Activated naive CD4-positive, alpha-beta T cell treated with anti-CD3 and anti-CD28 coated beads for 36 hours (primary cell): ENCODE measurements at regions of chr15 and their contacts with region 1.

Region 1: DNA sequence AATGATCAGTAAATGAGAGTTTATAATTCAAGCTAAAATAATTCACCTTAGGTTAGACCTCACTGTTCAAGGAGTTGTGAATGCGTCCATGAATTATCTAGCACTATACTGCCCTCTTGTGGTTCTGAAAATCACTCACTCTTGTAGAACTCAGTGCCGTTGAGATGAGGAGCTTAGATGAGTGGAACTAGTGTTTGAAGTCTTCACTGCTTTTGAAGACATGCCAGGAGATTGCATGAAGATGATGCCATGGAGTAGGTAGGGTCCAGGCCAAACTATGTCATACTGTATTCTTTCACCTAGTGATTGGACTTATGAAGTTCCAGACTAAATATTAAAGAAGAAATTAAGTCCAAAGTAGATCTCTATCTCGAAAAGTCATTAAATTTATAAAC is 28.8 kb downstream of the LYSMD4 start:
- DNase-seq: peak; percentile 48
- H3K4me3 Mint-ChIP-seq: no peak overlapping the region
- H3K27ac Mint-ChIP-seq: no peak overlapping the region
- H3K4me1 Mint-ChIP-seq: peaks cover 50% of the 10 kb centered on the region
- H3K27me3 Mint-ChIP-seq: no peaks in the 10 kb centered on the region

Region 2: GRCh38 chr15:98805434-98806274 is 898.8 kb before region 1 on chr15:
- CTCF ChIA-PET with region 1: no interaction called
- intact Hi-C with region 1: no loop called
- DNase-seq: no peak
- H3K4me3 Mint-ChIP-seq: no peak overlapping the region
- H3K27ac Mint-ChIP-seq: no peak overlapping the region
- H3K4me1 Mint-ChIP-seq: peaks cover 41% of the 10 kb centered on the region
- H3K27me3 Mint-ChIP-seq: no peaks in the 10 kb centered on the region

Region 3: DNA sequence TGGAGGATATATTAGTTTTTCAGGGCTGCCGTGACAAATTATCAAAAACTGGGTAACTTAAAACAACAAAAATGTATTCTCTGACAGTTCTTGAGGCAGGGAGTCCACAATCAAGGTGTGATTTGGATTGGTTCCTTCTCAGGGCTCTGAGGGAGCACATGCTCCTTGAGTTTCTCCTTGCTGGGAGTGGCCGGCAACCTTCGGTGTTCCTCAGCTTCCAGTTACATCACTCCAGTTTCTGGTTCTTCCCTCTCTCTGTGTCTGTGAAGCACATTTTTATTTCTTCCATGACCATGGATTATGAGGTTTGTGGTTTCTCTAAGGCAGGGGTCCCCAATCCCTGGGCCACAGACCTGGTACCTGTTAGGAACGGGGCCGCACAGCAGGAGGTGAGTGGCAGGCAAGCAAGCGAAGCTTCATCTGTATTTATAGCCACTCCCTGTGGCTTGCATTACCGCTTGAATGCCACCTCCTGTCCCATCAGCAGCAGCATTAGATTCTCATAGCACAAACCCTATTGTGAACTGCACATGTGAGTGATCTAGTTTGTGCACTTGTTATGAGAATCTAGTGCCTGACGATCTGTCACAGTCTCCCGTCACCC is 428.8 kb before region 1 on chr15:
- CTCF ChIA-PET with region 1: interaction called, 72 read pairs
- intact Hi-C with region 1: loop called (anchors 1 kb)
- DNase-seq: no peak
- H3K4me3 Mint-ChIP-seq: no peak overlapping the region
- H3K27ac Mint-ChIP-seq: no peak overlapping the region
- H3K4me1 Mint-ChIP-seq: peaks cover 27% of the 10 kb centered on the region
- H3K27me3 Mint-ChIP-seq: no peaks in the 10 kb centered on the region

Region 4: DNA sequence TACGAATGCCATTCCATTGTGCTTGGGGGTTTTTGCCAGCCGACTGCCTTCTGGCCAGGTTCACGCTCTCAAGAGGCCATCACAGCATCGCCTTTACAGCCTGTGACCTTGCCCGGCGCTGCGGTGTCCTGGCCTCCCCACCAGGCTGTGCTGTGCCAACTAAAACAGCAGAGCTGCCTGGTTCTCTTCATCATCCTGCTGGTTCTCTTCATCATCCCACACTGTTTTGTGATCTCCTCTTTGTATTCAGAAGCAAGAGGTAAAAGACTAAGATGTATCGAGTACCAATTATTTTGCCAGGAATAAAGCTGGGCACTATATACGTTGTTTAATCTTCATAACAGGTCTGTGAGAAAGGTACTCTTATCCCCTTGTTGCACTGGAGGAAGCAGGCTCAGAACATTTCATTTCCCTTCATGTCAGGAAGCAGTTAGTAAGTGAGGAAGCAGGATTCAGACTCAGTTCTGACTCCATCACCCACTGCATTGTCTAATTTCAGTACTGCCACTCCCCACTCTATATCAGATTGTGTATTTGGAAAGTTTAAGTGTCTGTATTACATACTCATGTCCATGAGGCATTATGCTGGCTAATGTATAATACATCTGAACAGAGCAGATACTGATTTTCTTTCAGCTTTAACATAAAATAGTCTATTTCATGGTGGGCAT is 360.4 kb before region 1 on chr15:
- CTCF ChIA-PET with region 1: interaction called, 5 read pairs
- intact Hi-C with region 1: loop called (anchors 1 kb)
- DNase-seq: peak; percentile 43
- H3K4me3 Mint-ChIP-seq: no peak overlapping the region
- H3K27ac Mint-ChIP-seq: no peak overlapping the region
- H3K4me1 Mint-ChIP-seq: peaks cover 10% of the 10 kb centered on the region
- H3K27me3 Mint-ChIP-seq: no peaks in the 10 kb centered on the region

Region 5: GRCh38 chr15:99409097-99409473 is 295.4 kb before region 1 on chr15:
- CTCF ChIA-PET with region 1: interaction called, 15 read pairs
- intact Hi-C with region 1: loop called (anchors 1 kb)
- DNase-seq: peak; percentile 64
- H3K4me3 Mint-ChIP-seq: no peak overlapping the region
- H3K27ac Mint-ChIP-seq: no peak overlapping the region
- H3K4me1 Mint-ChIP-seq: peaks cover 19% of the 10 kb centered on the region
- H3K27me3 Mint-ChIP-seq: no peaks in the 10 kb centered on the region

Region 6: DNA sequence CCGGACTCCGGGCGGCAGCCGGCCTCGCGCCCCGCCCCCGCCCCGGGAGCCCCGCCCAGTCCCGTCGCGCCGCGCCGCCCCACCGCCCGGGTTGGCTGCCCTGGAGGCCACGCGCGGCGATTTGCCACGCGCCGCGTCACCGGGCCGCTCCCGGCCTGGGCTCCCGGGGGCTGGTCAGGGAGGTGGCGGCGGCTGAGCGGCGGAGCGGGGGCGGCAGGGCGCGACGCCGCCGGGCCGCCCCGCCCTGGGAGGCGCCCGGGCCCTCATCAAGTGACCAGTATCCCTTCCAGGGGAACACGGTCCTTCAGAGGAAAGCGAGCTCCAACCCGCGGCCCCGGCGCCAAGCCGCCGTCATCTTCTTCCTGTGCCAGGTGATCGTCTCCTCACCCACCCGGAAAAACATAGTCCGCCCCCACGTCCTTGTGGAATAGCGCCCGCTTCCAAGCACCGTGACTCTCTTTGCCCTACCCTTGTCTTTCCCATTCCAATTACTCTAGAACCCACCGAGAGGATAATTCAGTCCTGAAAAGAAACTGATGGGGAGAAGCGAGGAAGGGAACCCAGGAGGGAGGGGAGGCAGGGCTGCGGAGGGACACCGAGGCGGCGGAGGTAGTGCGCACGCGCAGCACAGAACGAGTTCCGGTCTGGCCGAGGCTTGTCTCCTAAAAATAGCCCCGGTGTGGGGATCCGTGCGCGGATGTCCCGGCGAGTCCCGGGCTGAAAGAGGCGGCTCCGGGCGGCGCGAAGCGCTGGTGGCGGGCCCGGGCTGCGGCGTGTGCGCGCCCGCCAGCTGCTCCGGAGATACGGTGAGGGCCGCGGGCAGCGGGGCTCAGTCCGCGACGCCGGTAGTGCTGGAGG is 138.9 kb before region 1 on chr15 and contains the start of gene MEF2A:
- CTCF ChIA-PET with region 1: interaction called, 10 read pairs
- intact Hi-C with region 1: loop called (anchors 1 kb)
- DNase-seq: peak; percentile 95
- H3K4me3 Mint-ChIP-seq: peak within 1 kb of the TSS; percentile 99
- H3K27ac Mint-ChIP-seq: peak within 1 kb of the TSS; percentile 94
- H3K4me1 Mint-ChIP-seq: peaks cover 24% of the 10 kb centered on the region
- H3K27me3 Mint-ChIP-seq: no peaks in the 10 kb centered on the region
- total RNA-seq, gene MEF2A: 15.3 to 15.5 TPM

Region 7: DNA sequence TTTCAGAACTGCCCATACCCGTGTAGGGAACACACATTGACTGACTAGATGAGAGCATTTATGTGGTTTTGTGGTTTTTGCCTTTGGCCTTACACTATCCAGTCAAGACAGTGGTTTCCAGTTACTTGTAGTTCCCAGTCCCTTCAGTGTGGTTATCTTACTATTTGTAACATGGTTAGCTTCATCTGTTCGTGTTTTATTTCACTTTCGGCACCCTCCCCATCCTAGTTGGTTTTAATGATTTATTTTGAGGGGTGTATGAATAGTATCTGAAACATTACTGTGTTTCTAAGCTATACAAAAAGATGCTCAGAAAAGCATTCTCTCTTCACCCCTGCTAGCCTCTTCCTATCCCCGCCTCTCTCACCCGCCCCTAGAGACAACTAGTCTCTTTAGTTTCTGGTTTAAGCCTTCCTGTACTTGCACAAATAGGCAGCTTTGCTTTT is 14.7 kb after region 1 on chr15:
- CTCF ChIA-PET with region 1: interaction called, 30 read pairs
- intact Hi-C with region 1: loop called (anchors 1 kb)
- DNase-seq: no peak
- H3K4me3 Mint-ChIP-seq: no peak overlapping the region
- H3K27ac Mint-ChIP-seq: no peak overlapping the region
- H3K4me1 Mint-ChIP-seq: peaks cover 40% of the 10 kb centered on the region
- H3K27me3 Mint-ChIP-seq: no peaks in the 10 kb centered on the region

Region 8: DNA sequence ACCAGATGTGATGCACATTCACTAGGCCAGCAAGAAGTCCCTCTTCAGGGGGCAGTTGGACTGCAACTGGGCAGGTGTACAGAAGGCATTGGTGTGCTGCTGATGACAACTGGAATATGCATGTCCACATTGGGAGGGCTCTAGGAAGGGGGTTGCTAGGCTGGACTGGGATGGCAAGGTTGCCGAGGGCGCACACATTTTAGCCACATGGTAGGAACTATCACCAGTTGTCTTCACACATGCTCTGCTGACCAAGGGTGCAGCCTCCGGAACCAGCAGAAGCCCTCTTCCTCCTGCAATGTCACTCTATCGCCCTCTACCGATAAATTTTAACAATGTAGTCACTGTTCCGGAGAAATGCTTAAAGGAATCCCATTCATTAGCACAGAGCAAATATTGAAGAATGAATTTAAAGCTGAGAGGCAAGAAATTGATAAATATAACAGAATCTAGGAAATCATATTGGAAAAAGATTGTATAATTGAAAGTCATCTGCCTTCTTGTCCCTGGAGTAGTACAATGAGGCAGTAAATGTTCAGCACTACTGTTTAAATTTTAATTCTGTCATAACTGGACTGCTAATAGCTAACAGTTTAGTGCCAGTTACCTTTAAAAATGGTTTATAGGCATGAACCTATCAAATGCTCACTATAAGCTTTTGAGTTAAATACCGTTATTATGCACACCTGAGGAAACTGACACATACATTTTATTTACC is 51.4 kb after region 1 on chr15:
- CTCF ChIA-PET with region 1: interaction called, 32 read pairs
- intact Hi-C with region 1: loop called (anchors 1 kb)
- DNase-seq: peak; percentile 35
- H3K4me3 Mint-ChIP-seq: no peak overlapping the region
- H3K27ac Mint-ChIP-seq: no peak overlapping the region
- H3K4me1 Mint-ChIP-seq: peaks cover 5% of the 10 kb centered on the region
- H3K27me3 Mint-ChIP-seq: no peaks in the 10 kb centered on the region

Region 9: GRCh38 chr15:99850517-99850916 is 146.1 kb after region 1 on chr15:
- CTCF ChIA-PET with region 1: no interaction called
- intact Hi-C with region 1: no loop called
- DNase-seq: no peak
- H3K4me3 Mint-ChIP-seq: no peak overlapping the region
- H3K27ac Mint-ChIP-seq: no peak overlapping the region
- H3K4me1 Mint-ChIP-seq: peaks cover 19% of the 10 kb centered on the region
- H3K27me3 Mint-ChIP-seq: no peaks in the 10 kb centered on the region

Region 10: GRCh38 chr15:99895189-99895955 is 190.9 kb after region 1 on chr15:
- CTCF ChIA-PET with region 1: no interaction called
- intact Hi-C with region 1: no loop called
- DNase-seq: no peak
- H3K4me3 Mint-ChIP-seq: no peak overlapping the region
- H3K27ac Mint-ChIP-seq: no peak overlapping the region
- H3K4me1 Mint-ChIP-seq: no peaks in the 10 kb centered on the region
- H3K27me3 Mint-ChIP-seq: no peaks in the 10 kb centered on the region